Endothelial cell of umbilical vein (primary cell): ENCODE measurements at regions of chr14 and their contacts with region 1.

Region 1: DNA sequence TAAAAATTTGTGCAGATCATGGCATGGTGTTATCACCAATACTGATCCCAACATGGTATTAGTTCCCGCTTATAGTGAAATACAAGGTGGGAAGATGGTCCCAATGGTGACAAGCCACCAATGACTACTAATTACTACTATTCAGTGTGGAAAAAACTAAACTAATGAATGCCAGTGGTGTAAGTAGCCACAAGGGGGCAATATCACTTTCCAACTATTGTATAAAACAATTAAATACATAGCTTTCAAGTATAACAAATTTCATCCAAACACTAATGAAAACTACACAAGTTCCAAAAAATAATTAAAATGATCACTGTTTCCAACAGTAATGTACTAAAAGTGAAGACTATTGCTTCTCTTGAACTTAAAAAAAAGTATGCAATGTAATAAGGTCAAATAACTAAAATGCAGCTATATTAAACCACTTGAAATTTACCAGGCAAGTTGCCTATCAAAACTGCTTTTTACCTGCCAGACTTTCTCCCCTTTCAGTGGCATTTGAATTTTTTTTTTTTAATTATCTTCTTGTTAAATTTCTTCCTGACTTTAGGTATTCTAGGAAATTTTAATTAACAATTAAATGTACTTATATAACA is 58.0 kb downstream of the PAPLN start:
- DNase-seq: peak; percentile 71
- H3K4me3 ChIP-seq: no peak overlapping the region
- H3K27ac ChIP-seq: no peak overlapping the region
- H3K4me1 ChIP-seq: peaks cover 3% of the 10 kb centered on the region
- H3K27me3 ChIP-seq: no peaks in the 10 kb centered on the region
- CTCF ChIP-seq: peak; percentile 48 to 55
- POLR2A ChIP-seq: no peak

Region 2: GRCh38 chr14:73269729-73270531 is 25.4 kb before region 1 on chr14:
- CTCF ChIA-PET with region 1: interaction called, 18 read pairs
- POLR2A ChIA-PET with region 1: no interaction called
- dilution Hi-C with region 1: no loop called
- intact Hi-C with region 1: no loop called
- DNase-seq: peak; percentile 61
- H3K4me3 ChIP-seq: peak overlapping the region; percentile 17 to 44 (median 32)
- H3K27ac ChIP-seq: peak overlapping the region; percentile 28
- H3K4me1 ChIP-seq: peaks cover 15% of the 10 kb centered on the region
- H3K27me3 ChIP-seq: no peaks in the 10 kb centered on the region
- CTCF ChIP-seq: no peak
- POLR2A ChIP-seq: peak; percentile 70

Region 3: GRCh38 chr14:73325630-73326299 is 30.5 kb after region 1 on chr14:
- CTCF ChIA-PET with region 1: interaction called, 15 read pairs
- POLR2A ChIA-PET with region 1: no interaction called
- dilution Hi-C with region 1: no loop called
- intact Hi-C with region 1: no loop called
- DNase-seq: no peak
- H3K4me3 ChIP-seq: no peak overlapping the region
- H3K27ac ChIP-seq: no peak overlapping the region
- H3K4me1 ChIP-seq: peaks cover 10% of the 10 kb centered on the region
- H3K27me3 ChIP-seq: no peaks in the 10 kb centered on the region
- CTCF ChIP-seq: no peak
- POLR2A ChIP-seq: no peak

Region 4: GRCh38 chr14:73397810-73398209 is 102.5 kb after region 1 on chr14:
- CTCF ChIA-PET with region 1: interaction called, 14 read pairs
- POLR2A ChIA-PET with region 1: no interaction called
- dilution Hi-C with region 1: no loop called
- intact Hi-C with region 1: no loop called
- DNase-seq: no peak
- H3K4me3 ChIP-seq: no peak overlapping the region
- H3K27ac ChIP-seq: no peak overlapping the region
- H3K4me1 ChIP-seq: no peaks in the 10 kb centered on the region
- H3K27me3 ChIP-seq: no peaks in the 10 kb centered on the region
- CTCF ChIP-seq: no peak
- POLR2A ChIP-seq: no peak

Region 5: DNA sequence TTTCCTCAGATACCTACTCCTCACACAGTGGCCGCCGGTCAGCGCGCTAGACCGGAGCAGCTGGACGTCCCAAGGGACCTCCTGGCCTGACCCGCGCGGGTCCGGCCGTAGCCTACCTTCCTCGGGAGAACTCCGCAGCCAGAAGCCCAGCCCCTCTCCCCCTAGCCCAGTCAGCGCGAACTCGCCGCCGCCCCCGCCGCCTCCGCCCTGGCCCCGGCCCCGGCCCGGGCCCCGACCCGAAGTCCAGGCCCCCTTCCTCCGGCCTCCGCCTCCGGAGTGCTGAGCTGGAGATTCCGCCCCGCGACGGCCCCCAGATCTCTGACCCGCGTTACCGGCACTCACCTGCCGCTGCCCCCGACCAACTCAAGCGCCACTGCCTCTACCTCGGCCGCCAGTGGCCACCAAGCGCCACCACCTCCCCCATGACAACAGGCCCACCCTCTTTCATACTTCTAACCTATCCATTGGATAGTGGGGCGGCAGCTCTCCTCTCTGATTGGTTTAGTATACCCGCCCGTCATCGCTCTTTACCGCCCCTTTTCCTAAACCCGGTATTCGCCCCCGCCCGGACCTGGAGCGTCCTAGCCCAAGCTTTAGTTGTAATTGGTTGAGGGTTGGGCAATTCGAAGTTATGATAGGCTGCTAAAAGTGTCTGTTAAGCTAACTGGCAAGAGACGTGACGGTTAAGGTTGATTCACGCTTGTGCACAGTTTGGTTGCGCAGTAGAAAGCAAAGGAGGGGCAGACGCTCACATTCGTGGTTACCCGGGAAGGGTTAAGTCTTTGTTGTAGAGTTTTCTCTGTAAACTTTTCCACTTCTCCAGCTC is 163.1 kb after region 1 on chr14 and contains the start of gene NUMB:
- CTCF ChIA-PET with region 1: interaction called, 123 read pairs
- POLR2A ChIA-PET with region 1: no interaction called
- dilution Hi-C with region 1: loop called (anchors 25 kb)
- intact Hi-C with region 1: loop called (anchors 5 kb)
- DNase-seq: peak; percentile 100
- H3K4me3 ChIP-seq: peak within 1 kb of the TSS; percentile 76 to 98 (median 98)
- H3K27ac ChIP-seq: peak within 1 kb of the TSS; percentile 79
- H3K4me1 ChIP-seq: peaks cover 67% of the 10 kb centered on the region
- H3K27me3 ChIP-seq: no peaks in the 10 kb centered on the region
- CTCF ChIP-seq: no peak
- POLR2A ChIP-seq: peak; percentile 78
- total RNA-seq, gene NUMB: 116 and 128 TPM in 2 replicates

Region 6: GRCh38 chr14:73503648-73504047 is 208.4 kb after region 1 on chr14:
- CTCF ChIA-PET with region 1: interaction called, 11 read pairs
- POLR2A ChIA-PET with region 1: no interaction called
- dilution Hi-C with region 1: no loop called
- intact Hi-C with region 1: no loop called
- DNase-seq: no peak
- H3K4me3 ChIP-seq: no peak overlapping the region
- H3K27ac ChIP-seq: no peak overlapping the region
- H3K4me1 ChIP-seq: no peaks in the 10 kb centered on the region
- H3K27me3 ChIP-seq: no peaks in the 10 kb centered on the region
- CTCF ChIP-seq: no peak
- POLR2A ChIP-seq: no peak